ENCODE measurements at regions of chr7 and their contacts with region 1.

Region 1: DNA sequence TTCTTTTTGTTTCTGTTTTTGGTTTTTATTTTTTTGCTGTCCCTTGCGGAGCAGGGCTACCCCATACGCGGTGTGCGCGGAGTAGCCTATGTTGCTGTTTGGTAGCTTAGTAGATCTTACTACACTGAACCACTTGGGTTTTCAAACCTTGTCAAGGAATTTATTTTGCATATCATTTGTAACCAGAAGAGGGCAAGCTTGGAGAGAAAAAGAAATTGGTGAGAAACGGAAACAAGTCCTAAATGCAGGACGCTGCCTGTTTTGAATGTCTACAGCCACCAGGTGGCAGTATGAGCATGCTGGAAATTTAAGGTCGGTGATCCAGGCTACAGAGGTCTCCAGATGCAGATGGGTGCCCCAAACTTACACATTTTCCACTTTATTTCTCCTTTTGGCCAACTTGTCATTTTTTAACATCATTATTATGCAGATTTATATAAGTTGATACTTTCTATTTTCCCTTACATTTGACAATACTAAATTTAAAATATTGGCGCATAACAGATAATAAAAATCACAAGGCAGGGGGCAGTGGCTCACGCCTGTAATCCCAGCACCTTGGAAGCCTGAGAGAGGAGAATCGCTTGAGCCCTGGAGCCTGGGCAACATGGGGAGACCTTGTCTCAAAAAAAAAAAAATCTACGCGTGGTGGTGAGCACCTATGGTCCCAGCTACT is 15.3 kb upstream of the TRA2A start:
- DNase-seq: peak; percentile 89
- H3K4me3 ChIP-seq: no peak overlapping the region
- H3K27ac ChIP-seq: no peak overlapping the region
- H3K4me1 ChIP-seq: peaks cover 18% of the 10 kb centered on the region
- CTCF ChIP-seq: peak; percentile 98

Region 2: DNA sequence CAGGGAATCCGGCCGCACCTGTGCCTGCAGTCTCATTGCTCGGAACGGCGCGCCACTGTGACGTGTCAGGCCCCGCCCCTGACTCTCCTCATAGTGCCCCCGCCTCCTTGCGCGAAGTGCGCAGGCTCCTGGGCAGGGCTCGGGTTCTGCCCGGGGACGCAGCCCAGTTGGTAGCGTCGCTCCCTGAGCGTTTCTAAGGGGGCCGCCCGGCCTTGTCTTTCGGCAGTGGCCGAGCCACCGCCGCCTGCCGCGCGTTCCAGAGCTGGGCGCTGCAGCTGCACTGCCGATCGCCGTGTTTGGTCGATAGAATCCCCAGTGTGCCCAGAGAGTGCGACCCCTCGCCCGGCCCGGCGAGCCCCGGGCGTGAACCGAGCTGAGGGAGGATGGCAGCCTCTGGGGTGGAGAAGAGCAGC is 441.4 kb before region 1 on chr7 and contains the start of gene KLHL7:
- CTCF ChIA-PET with region 1: no interaction called
- POLR2A ChIA-PET with region 1: no interaction called
- intact Hi-C with region 1: loop called (anchors 10 kb)
- DNase-seq: peak; percentile 96
- H3K4me3 ChIP-seq: peak within 1 kb of the TSS; percentile 84
- H3K27ac ChIP-seq: peak within 1 kb of the TSS; percentile 80
- H3K4me1 ChIP-seq: peaks cover 22% of the 10 kb centered on the region
- CTCF ChIP-seq: no peak
- total RNA-seq, gene KLHL7: 24.4 and 25.8 TPM in 2 replicates

Region 3: DNA sequence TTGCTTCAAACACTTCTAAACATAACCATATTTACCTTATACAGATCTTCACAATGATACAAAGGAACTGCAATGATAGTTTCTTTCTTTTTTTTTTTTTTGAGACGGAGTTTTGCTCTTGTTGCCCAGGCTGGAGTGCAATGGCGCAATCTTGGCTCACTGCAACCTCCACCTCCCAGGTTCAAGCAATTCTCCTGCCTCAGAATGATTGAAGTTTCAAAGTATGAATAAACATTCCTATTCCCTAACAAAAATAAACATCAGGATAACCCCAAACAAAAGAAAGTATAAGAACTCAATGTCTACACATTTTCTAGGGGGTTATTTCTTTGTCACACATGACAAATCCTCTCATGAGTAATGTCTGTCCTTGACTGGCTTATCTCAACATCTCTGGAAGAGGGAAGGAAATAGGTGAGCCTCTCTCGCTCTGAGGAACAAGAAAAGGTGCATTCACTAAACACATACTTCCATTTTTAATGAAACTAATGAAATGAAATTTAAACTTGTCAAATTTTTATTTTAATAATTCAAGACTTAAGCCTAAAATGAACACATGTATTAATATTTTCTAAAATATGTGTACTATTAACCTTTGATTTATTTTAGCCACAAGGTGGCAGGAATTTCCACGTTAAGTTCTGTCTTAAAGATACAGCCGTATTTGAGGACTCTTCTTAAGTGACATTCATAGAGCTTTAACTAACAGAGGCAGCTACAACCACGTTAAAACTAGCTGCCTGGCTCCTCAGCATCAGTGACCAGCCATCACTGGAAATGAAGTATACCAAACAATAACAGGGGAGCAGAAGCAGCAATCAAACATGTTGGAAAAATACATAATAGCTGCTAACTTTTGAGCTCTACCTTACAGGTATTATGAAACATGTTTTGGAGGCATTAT is 189.6 kb before region 1 on chr7:
- CTCF ChIA-PET with region 1: no interaction called
- POLR2A ChIA-PET with region 1: interaction called, 3 read pairs
- intact Hi-C with region 1: loop called (anchors 5 kb)
- DNase-seq: peak; percentile 77
- H3K4me3 ChIP-seq: no peak overlapping the region
- H3K27ac ChIP-seq: peak overlapping the region; percentile 17
- H3K4me1 ChIP-seq: peaks cover 37% of the 10 kb centered on the region
- CTCF ChIP-seq: peak; percentile 87

Region 4: DNA sequence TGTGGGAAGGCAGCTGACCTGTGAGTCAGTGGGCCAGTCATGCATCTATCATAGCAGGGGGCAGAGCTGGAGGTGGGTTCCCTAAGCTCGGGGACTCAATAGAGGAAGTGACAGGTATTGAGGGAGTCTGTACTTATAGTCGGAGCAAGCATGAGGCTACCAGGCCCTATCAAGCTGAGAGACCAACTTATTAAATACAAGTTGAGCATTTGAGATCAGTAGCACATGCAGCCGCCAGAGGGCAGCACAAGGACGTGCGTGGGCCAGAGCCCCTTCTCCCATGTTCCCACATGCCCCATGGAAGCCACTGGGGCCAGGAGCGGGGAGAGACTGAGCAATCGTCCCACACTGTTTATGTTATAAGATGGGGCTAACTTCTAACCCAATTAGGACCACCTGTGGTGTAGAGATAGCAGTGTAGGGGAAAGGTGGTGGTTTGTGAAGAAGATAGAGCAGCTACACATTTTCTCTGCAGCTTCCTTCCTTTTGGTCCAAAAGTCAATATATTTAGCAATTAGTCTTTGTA is 149.9 kb after region 1 on chr7:
- CTCF ChIA-PET with region 1: no interaction called
- POLR2A ChIA-PET with region 1: no interaction called
- intact Hi-C with region 1: loop called (anchors 1 kb)
- DNase-seq: peak; percentile 77
- H3K4me3 ChIP-seq: no peak overlapping the region
- H3K27ac ChIP-seq: no peak overlapping the region
- H3K4me1 ChIP-seq: no peaks in the 10 kb centered on the region
- CTCF ChIP-seq: peak; percentile 94

Region 5: DNA sequence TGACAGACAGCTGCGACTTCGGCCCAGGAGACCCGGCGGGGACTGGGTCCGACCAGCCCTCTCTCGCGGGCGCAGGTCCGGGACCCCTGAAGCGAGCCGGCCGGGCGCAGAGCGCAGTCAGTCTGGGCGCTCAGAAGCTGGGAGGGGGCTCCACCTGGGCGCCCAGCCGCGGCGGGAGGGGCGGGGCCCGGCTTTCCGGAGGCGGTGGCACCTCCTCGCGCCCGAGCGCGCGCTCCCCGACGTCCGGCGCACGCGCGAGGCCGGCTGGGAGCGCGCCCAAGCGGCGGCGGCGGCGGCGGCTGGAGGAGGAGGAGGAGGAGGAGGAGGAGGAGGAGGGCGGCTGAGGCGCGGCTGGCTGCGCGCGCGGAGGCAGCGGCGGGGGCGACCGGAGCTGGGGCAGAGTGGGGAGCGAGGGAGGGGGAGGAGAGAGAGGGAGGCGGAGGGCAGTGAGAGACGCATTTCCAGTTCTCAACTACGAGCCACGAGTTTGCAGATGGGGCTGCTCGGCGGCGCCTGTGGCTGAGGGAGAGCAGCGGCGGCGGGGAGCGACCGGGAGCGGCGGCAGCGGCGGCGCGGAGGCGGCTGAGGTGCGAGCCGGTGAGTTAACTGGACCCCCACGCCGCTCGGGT is 1026.1 kb after region 1 on chr7 and contains the start of gene PALS2:
- CTCF ChIA-PET with region 1: no interaction called
- POLR2A ChIA-PET with region 1: no interaction called
- intact Hi-C with region 1: loop called (anchors 10 kb)
- DNase-seq: peak; percentile 88
- H3K4me3 ChIP-seq: peak within 1 kb of the TSS; percentile 96
- H3K27ac ChIP-seq: peak within 1 kb of the TSS; percentile 64
- H3K4me1 ChIP-seq: peaks cover 36% of the 10 kb centered on the region
- CTCF ChIP-seq: no peak
- total RNA-seq, gene PALS2: 26.3 and 45.1 TPM in 2 replicates